Activated CD4-positive, alpha-beta T cell treated with anti-CD3 and anti-CD28 coated beads, Interleukin-2, amount 10 ng/mL, durations not matched to agents 24 days and 14 days (primary cell): ENCODE measurements at regions of chr4 and their contacts with region 1.

Region 1: DNA sequence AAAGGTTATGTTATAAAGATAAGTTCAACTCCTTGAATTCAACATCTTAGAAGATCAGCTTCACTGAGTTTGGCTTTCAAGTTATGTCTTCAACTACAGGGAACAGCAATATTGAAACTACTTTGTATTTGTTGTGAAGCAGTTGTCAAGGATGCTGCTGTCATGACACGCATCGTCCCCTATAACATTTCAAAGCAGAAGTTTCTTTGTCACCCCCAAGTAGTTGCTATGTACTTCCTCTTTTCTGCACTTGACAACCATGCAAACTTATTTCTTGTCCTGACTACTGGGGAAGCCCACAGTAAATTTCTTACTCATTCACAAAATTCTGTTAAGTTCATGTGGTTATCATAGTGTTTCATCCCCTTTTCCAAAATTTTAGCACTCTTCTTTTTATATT is 14.3 kb downstream of the ANTXR2 start:
- DNase-seq: peak; percentile 87
- H3K4me3 Mint-ChIP-seq: peak overlapping the region; percentile 81
- H3K27ac Mint-ChIP-seq: peak overlapping the region; percentile 97
- H3K4me1 Mint-ChIP-seq: peaks cover 36% of the 10 kb centered on the region
- H3K27me3 Mint-ChIP-seq: no peaks in the 10 kb centered on the region

Region 2: DNA sequence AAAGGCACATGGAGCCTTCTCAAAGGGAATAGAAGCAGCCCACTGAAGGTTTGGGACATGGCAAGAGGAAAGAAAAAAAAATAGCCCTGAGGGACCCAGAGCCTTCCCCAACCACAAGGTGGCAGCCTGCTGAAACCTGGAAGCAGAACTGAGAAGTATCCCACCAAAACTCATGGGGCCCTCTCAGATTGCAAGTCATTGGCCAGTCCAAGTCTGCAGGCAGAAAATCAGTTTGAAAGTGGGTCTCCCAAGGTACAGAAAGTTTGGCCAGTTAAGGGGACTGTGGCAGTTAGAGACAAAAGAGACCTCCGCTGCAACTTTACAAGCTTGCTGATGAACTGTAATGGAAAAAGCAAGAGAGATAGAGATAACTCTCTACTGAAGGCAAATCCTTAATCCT is 141.5 kb before region 1 on chr4:
- intact Hi-C with region 1: loop called (anchors 1 kb)
- DNase-seq: peak; percentile 83
- H3K4me3 Mint-ChIP-seq: no peak overlapping the region
- H3K27ac Mint-ChIP-seq: no peak overlapping the region
- H3K4me1 Mint-ChIP-seq: peaks cover 12% of the 10 kb centered on the region
- H3K27me3 Mint-ChIP-seq: no peaks in the 10 kb centered on the region

Region 3: GRCh38 chr4:80036949-80037685 is 21.6 kb before region 1 on chr4:
- intact Hi-C with region 1: loop called (anchors 2 kb)
- DNase-seq: no peak
- H3K4me3 Mint-ChIP-seq: peak overlapping the region; percentile 73
- H3K27ac Mint-ChIP-seq: peak overlapping the region; percentile 93
- H3K4me1 Mint-ChIP-seq: peaks cover 25% of the 10 kb centered on the region
- H3K27me3 Mint-ChIP-seq: no peaks in the 10 kb centered on the region

Region 4: GRCh38 chr4:80153874-80154544 is 95.3 kb after region 1 on chr4:
- intact Hi-C with region 1: loop called (anchors 1 kb)
- DNase-seq: no peak
- H3K4me3 Mint-ChIP-seq: peak overlapping the region; percentile 43
- H3K27ac Mint-ChIP-seq: peak overlapping the region; percentile 88
- H3K4me1 Mint-ChIP-seq: peaks cover 18% of the 10 kb centered on the region
- H3K27me3 Mint-ChIP-seq: peaks cover 7% of the 10 kb centered on the region

Region 5: DNA sequence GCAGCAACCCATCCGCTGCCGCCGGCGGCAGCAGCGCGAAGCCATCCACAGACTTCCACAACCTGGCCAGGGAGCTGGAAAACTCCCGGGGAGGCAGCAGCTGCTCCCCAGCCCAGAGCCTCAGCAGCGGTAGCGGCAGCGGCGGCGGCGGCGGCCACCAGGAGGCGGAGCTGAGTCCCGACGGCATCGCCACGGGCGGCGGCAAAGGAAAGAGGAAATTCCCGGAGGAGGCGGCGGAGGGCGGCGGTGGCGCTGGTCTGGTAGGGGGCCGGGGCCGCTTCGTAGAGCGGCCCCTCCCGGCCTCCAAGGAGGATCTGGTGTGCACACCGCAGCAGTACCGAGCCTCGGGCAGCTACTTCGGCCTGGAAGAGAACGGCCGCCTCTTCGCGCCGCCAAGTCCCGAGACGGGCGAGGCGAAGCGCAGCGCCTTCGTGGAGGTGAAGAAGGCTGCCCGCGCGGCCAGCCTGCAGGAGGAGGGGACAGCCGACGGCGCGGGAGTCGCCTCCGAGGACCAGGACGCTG is 143.5 kb after region 1 on chr4:
- intact Hi-C with region 1: loop called (anchors 5 kb)
- DNase-seq: peak; percentile 95
- H3K4me3 Mint-ChIP-seq: peak overlapping the region; percentile 77
- H3K27ac Mint-ChIP-seq: peak overlapping the region; percentile 71
- H3K4me1 Mint-ChIP-seq: peaks cover 23% of the 10 kb centered on the region
- H3K27me3 Mint-ChIP-seq: peaks cover 40% of the 10 kb centered on the region

Region 6: DNA sequence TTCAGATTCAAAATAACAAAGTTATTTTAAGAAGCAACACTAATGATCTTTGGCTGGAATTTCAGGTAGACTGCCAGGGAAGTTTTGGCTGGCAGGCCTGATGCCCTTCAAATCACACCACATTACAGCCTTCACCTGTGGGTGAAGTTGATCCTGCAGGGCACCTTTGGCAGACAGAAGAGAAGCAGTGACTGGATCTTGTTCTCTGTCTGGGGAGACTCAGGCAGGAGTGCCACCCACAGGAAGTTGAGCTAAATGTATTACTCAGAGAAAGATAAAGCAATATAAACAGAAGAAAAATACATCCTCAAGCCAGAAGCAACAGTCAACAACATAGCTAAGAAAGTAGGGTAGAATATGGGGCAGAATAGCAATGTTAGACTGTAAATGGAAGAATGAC is 264.0 kb after region 1 on chr4:
- intact Hi-C with region 1: no loop called
- DNase-seq: peak; percentile 58
- H3K4me3 Mint-ChIP-seq: no peak overlapping the region
- H3K27ac Mint-ChIP-seq: no peak overlapping the region
- H3K4me1 Mint-ChIP-seq: no peaks in the 10 kb centered on the region
- H3K27me3 Mint-ChIP-seq: peaks cover 5% of the 10 kb centered on the region